ENCODE measurements at regions of chrX and their contacts with region 1.

Region 1: DNA sequence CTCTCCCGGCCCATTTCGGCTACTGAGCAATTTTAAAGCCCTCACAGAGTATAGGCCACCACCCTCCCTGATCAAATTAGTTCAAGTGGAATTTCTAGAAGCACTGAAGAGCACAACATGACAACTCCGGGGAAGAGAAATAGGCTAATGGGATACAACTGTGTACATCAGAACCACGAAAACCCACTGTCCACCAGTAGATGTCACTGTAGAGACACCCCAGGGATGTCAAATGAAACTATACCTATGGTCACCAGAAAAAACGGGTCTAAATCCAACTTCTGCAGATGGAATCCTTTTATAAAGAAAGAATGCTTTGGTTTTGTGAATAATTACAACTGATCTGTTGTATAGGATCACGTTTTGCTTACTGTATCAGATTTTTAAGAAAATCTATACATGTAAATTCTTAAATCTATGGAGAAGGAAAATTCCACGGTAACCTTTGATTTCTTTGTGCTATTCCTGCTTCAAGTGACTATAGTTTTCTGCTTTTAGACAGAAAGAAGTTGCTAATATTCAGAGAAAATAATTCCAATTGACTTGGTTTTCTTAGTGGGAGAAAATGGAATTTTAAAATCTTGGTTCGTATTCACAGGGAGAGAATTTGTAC is 29.5 kb upstream of the MAP3K15 start:
- DNase-seq: peak; percentile 59
- H3K4me3 ChIP-seq: no peak overlapping the region
- H3K27ac ChIP-seq: no peak overlapping the region
- H3K4me1 ChIP-seq: no peaks in the 10 kb centered on the region
- H3K27me3 ChIP-seq: no peaks in the 10 kb centered on the region
- CTCF ChIP-seq: peak; percentile 72

Region 2: DNA sequence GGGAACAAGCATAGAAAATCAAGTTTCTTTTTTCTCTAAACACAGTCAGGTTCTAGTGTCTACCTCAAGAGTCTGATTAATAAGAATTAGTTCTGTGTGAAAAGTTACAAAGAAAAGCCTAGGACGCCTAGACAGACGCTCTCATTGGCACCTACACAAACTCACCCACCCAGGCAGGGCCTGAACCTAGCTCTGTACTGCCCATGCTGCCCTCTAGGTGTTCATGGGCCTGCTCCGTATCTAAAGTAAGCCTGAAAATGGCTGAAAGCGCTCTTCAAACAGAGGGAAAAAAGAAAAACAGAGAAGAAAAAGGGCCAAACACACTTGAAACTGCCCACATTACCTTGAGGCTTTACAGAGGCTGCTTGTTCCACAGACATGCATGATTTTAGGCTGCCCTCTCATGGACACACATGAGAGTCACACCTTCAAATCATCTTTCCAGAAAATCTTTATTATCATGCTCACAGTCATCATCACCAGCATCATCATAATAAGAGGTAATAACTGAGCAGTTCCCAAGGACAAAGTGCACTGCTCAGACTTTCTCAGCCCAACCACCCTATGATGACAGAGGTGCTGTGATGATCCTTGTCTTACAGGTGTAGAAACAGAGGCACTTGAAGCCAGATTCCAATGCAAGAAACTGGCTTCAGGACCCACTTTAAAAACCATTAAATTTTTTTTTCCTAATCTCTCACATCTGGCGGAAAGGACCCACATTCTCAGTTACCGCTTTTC is 522.3 kb after region 1 on chrX:
- intact Hi-C with region 1: loop called (anchors 5 kb)
- DNase-seq: peak; percentile 31
- H3K4me3 ChIP-seq: no peak overlapping the region
- H3K27ac ChIP-seq: no peak overlapping the region
- H3K4me1 ChIP-seq: no peaks in the 10 kb centered on the region
- H3K27me3 ChIP-seq: no peaks in the 10 kb centered on the region
- CTCF ChIP-seq: peak; percentile 47

Measured in colonic mucosa (tissue), 4 donors.